Activated T-helper 1 cell treated with anti-CD3 and anti-CD28 coated beads, Interleukin-12 subunit alpha, Interleukin-12 subunit beta, Interleukin-2, Interleukin-4 antibody, amounts not matched to agents 30 ng/mL and 10 ng/mL and 1 ng/mL, durations not matched to agents 14 hours and 24 hours and 36 hours (primary cell): ENCODE measurements at regions of chr18 and their contacts with region 1.

Region 1: DNA sequence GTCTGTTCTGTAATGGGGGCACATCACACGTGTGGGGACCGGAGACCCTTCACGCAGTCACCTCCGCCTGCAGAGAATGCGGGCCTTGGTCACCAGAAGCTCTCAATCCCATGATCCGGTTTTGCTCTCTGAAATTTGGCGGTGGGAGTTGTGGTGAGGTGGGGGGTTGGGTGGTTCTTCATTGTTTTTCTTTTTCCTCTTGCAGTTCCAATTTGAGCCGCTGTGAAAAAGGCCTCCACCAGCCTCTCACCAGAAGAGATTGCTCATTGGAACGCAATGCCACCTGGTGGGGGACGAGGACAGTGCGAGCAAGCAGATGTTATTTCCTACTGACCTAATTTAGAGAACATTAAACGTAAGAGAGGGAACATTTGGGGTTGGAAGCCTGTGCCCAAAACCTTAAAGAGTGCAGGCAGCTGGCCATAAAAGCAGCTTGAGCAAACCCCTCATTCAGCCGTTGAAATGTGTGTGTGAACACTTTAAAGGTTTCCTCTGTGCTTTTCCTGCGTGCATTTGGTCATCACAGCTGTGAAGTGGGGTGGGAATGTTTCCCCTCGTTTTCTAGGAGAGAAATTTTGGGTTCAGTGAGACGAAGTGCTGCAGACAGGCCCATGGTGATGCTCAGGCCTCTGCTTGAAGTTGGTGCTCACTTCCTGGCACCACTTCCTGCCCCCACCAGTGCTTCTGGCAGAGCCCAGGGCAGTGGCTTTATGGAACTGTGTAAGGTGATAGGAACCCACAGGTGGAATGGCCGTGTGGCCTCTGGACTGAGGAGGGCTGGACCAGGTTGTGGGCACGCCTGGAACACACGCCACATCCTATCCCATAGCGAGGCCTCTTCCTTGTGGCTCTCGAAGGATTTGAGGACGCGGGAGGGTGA is 61.7 kb downstream of the ZCCHC2 start:
- DNase-seq: peak; percentile 75
- H3K4me3 Mint-ChIP-seq: peak overlapping the region; percentile 0
- H3K27ac Mint-ChIP-seq: peak overlapping the region; percentile 61
- H3K4me1 Mint-ChIP-seq: peaks cover 44% of the 10 kb centered on the region
- H3K27me3 Mint-ChIP-seq: no peaks in the 10 kb centered on the region

Region 2: GRCh38 chr18:62324917-62325805 is 259.3 kb before region 1 on chr18 and contains the start of gene TNFRSF11A:
- intact Hi-C with region 1: loop called (anchors 1 kb)
- DNase-seq: peak; percentile 62
- H3K4me3 Mint-ChIP-seq: peak within 1 kb of the TSS; percentile 97
- H3K27ac Mint-ChIP-seq: peak within 1 kb of the TSS; percentile 87
- H3K4me1 Mint-ChIP-seq: peaks cover 62% of the 10 kb centered on the region
- H3K27me3 Mint-ChIP-seq: peaks cover 34% of the 10 kb centered on the region
- total RNA-seq, gene TNFRSF11A: 22.9 and 27.1 TPM in 2 replicates

Region 3: DNA sequence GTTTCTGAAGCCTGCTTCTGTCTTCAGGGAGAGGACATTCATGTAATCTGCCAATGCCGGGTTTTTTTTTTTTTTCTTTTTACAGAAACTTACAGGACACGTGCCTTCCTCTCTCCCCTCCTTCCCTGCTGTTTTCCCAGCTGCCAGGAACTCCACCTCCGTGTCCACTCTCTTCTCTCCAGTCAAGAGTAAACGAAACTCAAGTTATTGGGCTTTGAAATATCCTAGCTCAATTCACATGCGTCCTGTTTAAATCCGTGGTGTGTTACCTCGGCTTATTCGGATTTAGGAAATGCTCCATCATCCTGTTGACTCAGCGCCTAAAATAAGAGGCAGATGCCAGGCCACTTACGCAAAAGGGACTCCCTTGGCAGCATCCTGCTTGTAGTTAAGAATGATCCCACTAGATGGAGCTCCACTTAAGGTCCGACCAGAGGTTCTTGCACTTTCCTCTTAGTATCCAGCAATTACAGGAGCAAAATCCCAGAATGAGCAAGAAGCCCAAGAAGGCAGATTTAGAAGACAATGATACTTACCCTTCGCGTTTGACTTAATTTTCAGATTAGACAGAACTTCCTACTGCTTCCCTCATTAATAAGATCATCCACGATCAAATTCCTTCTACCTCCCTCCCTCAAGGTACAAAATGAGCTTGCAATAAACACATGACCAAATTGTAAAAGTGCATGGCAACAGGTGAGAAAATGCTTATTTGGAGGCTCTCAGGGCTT is 158.9 kb before region 1 on chr18:
- intact Hi-C with region 1: loop called (anchors 1 kb)
- DNase-seq: peak; percentile 56
- H3K4me3 Mint-ChIP-seq: peak overlapping the region; percentile 19
- H3K27ac Mint-ChIP-seq: peak overlapping the region; percentile 69
- H3K4me1 Mint-ChIP-seq: peaks cover 44% of the 10 kb centered on the region
- H3K27me3 Mint-ChIP-seq: no peaks in the 10 kb centered on the region

Region 4: GRCh38 chr18:62637807-62638687 is 53.6 kb after region 1 on chr18:
- intact Hi-C with region 1: loop called (anchors 1 kb)
- DNase-seq: peak; percentile 36
- H3K4me3 Mint-ChIP-seq: no peak overlapping the region
- H3K27ac Mint-ChIP-seq: no peak overlapping the region
- H3K4me1 Mint-ChIP-seq: peaks cover 17% of the 10 kb centered on the region
- H3K27me3 Mint-ChIP-seq: peaks cover 6% of the 10 kb centered on the region

Region 5: DNA sequence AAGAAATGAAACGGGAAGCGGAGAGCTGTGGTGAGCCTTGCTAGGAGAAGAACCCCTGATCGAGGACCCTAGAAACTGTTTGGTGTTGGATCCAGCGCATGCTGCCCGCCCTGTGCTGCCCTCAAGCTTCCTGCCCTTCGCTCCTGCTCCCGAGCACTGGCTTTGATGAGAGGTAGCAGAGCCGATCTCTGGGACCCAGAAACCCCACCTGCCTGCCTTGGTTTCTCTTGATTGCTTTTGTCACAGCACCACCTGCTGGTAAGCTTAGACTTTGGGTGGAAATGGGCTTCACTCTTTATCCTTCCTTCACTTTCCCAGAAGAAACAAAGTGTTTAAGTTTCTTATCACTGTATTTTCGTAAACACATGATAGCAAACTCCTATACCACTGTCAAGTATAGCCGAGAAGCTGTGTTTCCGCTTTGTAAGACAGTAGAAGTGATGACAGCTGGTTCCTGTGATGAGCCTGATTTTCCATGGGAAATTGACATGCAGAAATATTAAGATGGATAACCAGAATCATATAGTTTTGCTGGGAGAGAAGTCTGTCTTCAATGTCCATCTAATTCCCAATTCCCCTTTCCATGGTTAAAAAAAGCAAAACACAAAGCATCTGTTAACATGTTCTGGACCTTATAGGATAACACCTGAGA is 398.2 kb after region 1 on chr18:
- intact Hi-C with region 1: loop called (anchors 1 kb)
- DNase-seq: peak; percentile 28
- H3K4me3 Mint-ChIP-seq: no peak overlapping the region
- H3K27ac Mint-ChIP-seq: no peak overlapping the region
- H3K4me1 Mint-ChIP-seq: no peaks in the 10 kb centered on the region
- H3K27me3 Mint-ChIP-seq: no peaks in the 10 kb centered on the region

Region 6: DNA sequence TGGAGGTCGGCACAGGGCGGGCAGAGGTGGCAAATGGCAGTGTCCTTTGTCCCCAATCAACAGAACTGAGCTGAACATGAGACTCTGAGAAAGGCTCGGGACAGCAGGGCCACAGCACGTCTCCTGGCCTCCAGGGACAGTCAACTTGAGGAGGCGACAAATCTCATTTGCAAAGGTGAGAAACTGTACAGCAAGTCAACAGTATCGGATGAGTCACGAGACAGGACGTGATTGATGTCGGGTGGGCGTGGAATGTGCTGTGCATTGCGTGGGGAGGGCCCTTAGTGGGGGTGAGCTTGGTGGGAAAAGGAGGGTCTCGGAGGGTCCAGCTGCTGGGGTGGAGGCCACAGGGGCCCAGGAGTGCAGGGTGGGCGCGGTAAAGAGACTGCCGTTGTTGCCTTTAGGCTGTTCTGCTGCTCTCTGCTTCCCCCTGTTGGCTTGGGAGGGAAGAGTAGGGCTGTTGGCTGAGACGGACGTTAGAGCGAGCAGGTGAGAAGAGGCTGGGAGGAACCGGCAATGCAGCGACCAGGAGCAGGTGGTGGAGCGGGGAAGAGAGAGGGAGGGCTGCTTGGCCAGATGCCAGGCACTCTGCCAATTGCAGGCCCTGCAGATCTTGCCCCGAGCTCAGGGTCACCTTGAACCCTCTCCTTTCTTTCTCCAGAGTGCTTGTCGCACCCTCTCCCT is 570.8 kb after region 1 on chr18:
- intact Hi-C with region 1: no loop called
- DNase-seq: peak; percentile 72
- H3K4me3 Mint-ChIP-seq: peak overlapping the region; percentile 79
- H3K27ac Mint-ChIP-seq: peak overlapping the region; percentile 88
- H3K4me1 Mint-ChIP-seq: peaks cover 99% of the 10 kb centered on the region
- H3K27me3 Mint-ChIP-seq: no peaks in the 10 kb centered on the region

Region 7: DNA sequence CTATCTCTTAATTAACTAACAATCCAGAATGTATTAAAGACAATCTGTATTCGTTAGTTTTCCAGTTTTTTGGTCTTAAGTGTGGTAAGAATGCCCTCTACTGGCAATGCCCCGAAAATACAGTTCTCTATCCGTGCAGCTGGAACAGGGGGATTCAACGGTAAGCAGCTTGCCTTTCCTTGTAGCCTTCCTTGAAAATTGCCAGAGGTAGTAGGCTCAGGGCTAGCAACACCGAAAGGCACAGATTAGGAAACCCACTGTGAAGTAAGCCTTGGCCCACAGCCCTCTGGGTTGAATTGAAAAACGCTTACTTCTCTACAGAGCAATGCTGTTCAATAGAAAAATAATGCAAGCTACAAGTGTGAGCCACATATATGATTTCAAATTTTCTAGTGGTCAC is 854.9 kb after region 1 on chr18:
- intact Hi-C with region 1: loop called (anchors 1 kb)
- DNase-seq: peak; percentile 19
- H3K4me3 Mint-ChIP-seq: no peak overlapping the region
- H3K27ac Mint-ChIP-seq: no peak overlapping the region
- H3K4me1 Mint-ChIP-seq: peaks cover 6% of the 10 kb centered on the region
- H3K27me3 Mint-ChIP-seq: peaks cover 23% of the 10 kb centered on the region